Transverse colon (tissue), 4 donors: ENCODE measurements at regions of chr2 and their contacts with region 1.

Region 1: DNA sequence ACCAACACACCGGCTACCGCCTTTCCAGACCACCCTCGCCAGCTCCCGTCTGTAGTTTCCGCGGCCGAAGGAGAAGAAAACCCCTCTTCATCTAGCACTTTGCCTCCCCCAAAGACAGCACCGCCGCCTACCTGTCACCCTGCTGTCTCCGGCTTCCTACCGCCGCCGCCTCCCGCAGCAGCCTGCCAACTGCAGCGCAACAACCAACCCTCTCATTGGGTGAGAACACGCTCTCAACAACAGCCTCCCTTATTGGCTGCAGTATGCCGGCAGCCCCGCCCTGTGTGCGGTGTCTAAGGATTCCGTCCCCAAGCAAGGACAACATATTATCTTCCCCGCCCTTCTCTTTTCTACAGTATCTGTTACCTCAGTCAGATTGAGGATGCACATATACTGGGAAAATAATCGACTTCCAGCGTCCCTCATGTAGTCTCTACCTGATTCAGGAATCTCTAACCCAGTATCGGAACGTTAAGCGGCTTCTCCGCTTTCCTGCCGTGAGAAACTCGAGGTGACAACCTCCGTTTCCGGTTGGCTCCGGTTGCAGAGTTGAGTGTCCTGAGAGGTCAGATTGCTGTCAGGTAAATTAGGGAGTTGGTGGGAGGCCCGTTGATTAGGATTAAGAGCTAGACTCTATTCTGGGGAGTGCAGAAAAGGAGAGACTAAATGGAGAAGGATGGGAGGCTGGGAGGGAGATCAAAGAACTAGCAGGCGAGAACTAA is at the starts of genes HYCC2 and NDUFB3:
- DNase-seq: peak; percentile 94
- H3K4me3 ChIP-seq: peak within 1 kb of the TSS; percentile 77 to 89 (median 82)
- H3K27ac ChIP-seq: peak within 1 kb of the TSS; percentile 88 to 92 (median 90)
- H3K4me1 ChIP-seq: peaks cover 33 to 55% (median 39%) of the 10 kb centered on the region in 4 donors
- H3K27me3 ChIP-seq: no peaks in the 10 kb centered on the region
- CTCF ChIP-seq: peak; percentile 27 to 66 (median 40)
- EP300 ChIP-seq: peak; percentile 26
- POLR2A ChIP-seq: peak; percentile 88
- total RNA-seq, gene HYCC2: 23.9 to 104 (median 35.8) TPM
- total RNA-seq, gene NDUFB3: 2.2 to 111 (median 44.9) TPM

Region 2: DNA sequence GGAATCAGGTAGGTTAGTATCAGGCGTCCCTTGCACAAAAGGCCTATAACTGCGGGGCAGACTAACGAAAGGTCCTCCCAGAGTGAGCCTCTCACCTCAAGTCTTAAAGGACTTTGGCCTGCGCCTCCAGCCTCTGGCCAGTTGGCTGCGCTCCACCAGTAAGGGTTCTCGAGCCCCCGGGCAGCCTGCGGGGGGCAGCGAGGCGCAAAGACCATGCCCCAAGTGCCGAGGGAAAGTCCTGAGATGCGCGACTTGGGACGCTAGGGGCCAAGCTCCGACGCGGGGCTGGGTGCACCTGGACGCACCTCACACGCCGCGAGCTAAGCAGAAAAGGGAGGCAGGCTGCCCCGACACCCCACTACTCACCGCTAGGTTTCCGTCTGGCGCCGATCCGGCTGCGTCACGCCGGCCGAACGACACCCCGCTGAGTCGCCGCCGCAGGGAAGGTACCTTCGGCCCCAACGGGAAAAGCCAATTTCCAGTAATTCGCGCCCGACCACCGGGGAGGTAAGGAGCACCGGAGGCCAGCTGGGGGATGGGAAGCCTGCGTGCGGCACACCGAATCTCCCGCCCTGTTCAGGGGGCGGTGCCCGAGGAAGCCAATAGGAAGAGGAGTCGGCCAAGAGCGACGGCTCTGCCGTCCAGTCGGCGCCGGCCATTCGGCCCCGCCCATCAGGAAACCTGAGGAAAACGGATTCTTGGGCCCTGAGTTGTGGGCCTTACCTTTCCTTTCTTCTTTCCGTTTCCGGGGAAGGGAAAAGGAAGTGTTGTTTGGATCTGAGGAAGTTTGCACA is 108.3 kb before region 1 on chr2 and contains the start of gene ORC2:
- in situ Hi-C with region 1: loop called in 2 of 4 experiments (anchors 25 kb)
- intact Hi-C with region 1: no loop called
- DNase-seq: peak; percentile 96
- H3K4me3 ChIP-seq: peak within 1 kb of the TSS; percentile 53 to 92 (median 78)
- H3K27ac ChIP-seq: peak within 1 kb of the TSS; percentile 87 to 93 (median 91)
- H3K4me1 ChIP-seq: peaks cover 14 to 62% (median 32%) of the 10 kb centered on the region in 4 donors
- H3K27me3 ChIP-seq: no peaks in the 10 kb centered on the region
- CTCF ChIP-seq: peak; percentile 64 to 98 (median 69)
- EP300 ChIP-seq: no peak
- POLR2A ChIP-seq: peak; percentile 50
- total RNA-seq, gene ORC2: 15.1 to 30.5 (median 20.8) TPM

Region 3: DNA sequence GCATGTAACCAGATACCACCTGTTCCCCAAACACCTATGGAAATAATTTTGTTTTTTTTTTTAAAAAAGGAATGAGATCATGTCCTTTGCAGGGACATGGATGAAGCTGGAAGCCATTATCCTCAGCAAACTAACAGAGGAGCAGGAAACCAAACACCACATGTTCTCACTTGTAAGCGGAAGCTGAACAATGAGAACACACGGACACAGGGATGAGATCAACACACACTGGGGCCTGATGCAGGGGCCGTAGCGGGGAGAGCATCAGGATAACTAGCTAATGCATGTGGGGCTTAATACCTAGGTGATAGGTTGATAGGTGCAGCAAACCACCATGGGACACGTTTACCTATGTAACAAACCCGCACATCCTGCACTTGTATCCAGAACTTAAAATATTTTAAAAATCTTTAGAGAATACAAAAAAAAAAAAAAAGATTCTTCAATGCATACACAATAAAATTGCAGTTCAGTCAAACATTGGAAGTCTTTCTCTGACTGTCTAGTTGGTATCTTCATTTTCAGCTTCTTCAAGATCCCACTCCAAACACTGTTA is 99.7 kb after region 1 on chr2:
- in situ Hi-C with region 1: loop called in 1 of 4 experiments (anchors 10 kb)
- intact Hi-C with region 1: no loop called
- DNase-seq: no peak
- H3K4me3 ChIP-seq: no peak overlapping the region
- H3K27ac ChIP-seq: no peak overlapping the region
- H3K4me1 ChIP-seq: peaks cover 3 to 15% (median 10%) of the 10 kb centered on the region in 4 donors
- H3K27me3 ChIP-seq: no peaks in the 10 kb centered on the region
- CTCF ChIP-seq: no peak
- EP300 ChIP-seq: no peak
- POLR2A ChIP-seq: no peak